ENCODE measurements at regions of chr9 and their contacts with region 1.

Region 1: GRCh38 chr9:92716557-92716956 is 46.6 kb upstream of the IPPK start:
- DNase-seq: peak; percentile 65
- H3K4me3 Mint-ChIP-seq: no peak overlapping the region
- H3K27ac Mint-ChIP-seq: no peak overlapping the region
- H3K4me1 Mint-ChIP-seq: peaks cover 10% of the 10 kb centered on the region
- H3K27me3 Mint-ChIP-seq: no peaks in the 10 kb centered on the region

Region 2: GRCh38 chr9:92790542-92791527 is 74.3 kb after region 1 on chr9:
- intact Hi-C with region 1: loop called (anchors 1 kb)
- DNase-seq: peak; percentile 56
- H3K4me3 Mint-ChIP-seq: no peak overlapping the region
- H3K27ac Mint-ChIP-seq: no peak overlapping the region
- H3K4me1 Mint-ChIP-seq: peaks cover 12% of the 10 kb centered on the region
- H3K27me3 Mint-ChIP-seq: peaks cover 13% of the 10 kb centered on the region

Region 3: DNA sequence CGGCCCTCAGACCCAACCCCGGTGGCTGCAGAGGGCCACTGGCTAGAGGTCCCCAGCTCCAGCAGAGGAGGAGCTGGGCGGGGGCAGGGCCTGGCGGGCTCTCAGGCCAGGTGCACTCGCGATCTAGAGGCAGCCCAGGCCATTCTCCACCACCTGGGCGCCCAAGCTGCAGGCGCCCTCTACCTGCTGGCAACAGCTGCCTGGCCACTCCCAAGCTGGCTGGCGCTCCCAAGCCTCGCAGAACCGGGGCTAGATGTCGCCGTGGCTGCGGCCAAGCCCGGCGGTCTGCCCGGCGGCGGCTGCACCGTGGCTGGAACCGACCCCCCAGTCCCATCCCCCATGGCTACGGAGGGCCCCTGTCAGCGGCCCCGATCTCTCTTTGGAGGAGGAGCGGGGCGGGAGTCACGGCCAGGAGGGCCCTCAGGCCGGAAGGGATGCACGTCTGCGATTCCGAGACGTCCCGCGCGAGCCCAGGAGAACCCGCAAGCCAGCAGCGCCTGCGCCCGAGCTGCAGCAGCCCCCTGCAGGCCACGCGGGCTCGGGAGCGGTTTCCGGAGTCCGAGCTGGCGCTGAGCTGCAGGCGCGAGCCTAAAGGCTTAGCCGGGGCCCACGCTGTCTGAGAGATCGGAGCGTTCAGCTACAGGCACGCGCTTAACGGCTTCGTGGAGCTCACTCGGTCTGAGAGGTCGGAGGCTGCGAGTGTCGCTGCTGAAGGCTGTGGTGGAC is 92.3 kb after region 1 on chr9:
- intact Hi-C with region 1: loop called (anchors 5 kb)
- DNase-seq: peak; percentile 44
- H3K4me3 Mint-ChIP-seq: peak overlapping the region; percentile 84
- H3K27ac Mint-ChIP-seq: peak overlapping the region; percentile 88
- H3K4me1 Mint-ChIP-seq: peaks cover 5% of the 10 kb centered on the region
- H3K27me3 Mint-ChIP-seq: peaks cover 62% of the 10 kb centered on the region

Measured in activated T-helper 1 cell treated with anti-CD3 and anti-CD28 coated beads, Interleukin-12 subunit alpha, Interleukin-12 subunit beta, Interleukin-2, Interleukin-4 antibody, amounts not matched to agents 30 ng/mL and 10 ng/mL and 1 ng/mL, durations not matched to agents 14 hours and 24 hours and 36 hours (primary cell).